ENCODE measurements at regions of chr16 and their contacts with region 1.

Region 1: DNA sequence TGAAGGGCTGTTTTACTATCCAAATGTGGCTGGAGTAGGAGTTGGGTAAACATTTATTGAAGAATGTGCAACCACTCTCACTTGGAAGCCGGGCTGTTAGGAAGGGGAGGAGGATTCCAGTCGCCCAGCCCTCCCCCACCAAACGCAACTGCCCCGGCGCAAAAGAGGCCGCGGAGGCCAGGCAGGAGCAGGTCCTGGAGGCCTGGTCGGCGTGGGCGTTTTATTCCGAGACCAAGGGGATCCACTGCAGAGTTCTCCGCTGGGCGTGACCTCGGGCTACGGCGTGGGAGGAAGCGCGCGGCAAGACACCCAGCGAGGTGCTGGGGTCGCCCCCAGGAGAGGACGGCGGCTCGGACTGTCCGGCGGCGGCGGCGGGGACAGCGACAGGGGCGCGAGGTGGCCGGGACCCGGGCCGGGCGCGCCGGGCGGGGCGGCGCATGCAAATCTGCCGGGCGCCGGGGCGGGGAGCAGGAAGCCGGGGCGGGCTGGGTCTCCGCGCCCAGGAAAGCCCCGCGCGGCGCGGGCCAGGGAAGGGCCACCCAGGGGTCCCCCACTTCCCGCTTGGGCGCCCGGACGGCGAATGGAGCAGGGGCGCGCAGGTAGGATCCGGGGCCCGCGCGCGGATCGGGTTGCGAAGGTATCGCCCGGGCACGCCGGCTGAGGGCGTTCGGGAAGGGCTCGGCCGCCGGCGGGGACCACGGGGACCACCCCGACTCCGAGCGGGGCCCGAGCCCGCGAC is at the start of gene IL4R:
- DNase-seq: peak; percentile 74 to 76
- ATAC-seq: peak; percentile 32 to 67 (median 54)
- H3K4me3 ChIP-seq: peak within 1 kb of the TSS; percentile 70 to 97 (median 86)
- H3K27ac ChIP-seq: peak within 1 kb of the TSS; percentile 88 to 100 (median 96)
- H3K4me1 ChIP-seq: peaks cover 0 to 52% (median 36%) of the 10 kb centered on the region in 9 donors
- H3K27me3 ChIP-seq: peaks cover 0 to 12% (median 0%) of the 10 kb centered on the region in 7 donors
- CTCF ChIP-seq: no peak
- total RNA-seq, gene IL4R: 5.0 to 28.9 (median 9.7) TPM

Region 2: GRCh38 chr16:27242868-27243590 is 70.6 kb before region 1 on chr16:
- intact Hi-C with region 1: loop called in 7 of 10 experiments (anchors 5 to 10 kb)
- DNase-seq: no peak
- ATAC-seq: peak; percentile 50 to 80 (median 72)
- H3K4me3 ChIP-seq: peak overlapping the region in 6 of 10 donors; percentile 4 to 31 (median 27)
- H3K27ac ChIP-seq: peak overlapping the region in 9 of 10 donors; percentile 24 to 84 (median 68)
- H3K4me1 ChIP-seq: peaks cover 13 to 80% (median 60%) of the 10 kb centered on the region in 9 donors
- H3K27me3 ChIP-seq: no peaks in the 10 kb centered on the region
- CTCF ChIP-seq: no peak

Region 3: DNA sequence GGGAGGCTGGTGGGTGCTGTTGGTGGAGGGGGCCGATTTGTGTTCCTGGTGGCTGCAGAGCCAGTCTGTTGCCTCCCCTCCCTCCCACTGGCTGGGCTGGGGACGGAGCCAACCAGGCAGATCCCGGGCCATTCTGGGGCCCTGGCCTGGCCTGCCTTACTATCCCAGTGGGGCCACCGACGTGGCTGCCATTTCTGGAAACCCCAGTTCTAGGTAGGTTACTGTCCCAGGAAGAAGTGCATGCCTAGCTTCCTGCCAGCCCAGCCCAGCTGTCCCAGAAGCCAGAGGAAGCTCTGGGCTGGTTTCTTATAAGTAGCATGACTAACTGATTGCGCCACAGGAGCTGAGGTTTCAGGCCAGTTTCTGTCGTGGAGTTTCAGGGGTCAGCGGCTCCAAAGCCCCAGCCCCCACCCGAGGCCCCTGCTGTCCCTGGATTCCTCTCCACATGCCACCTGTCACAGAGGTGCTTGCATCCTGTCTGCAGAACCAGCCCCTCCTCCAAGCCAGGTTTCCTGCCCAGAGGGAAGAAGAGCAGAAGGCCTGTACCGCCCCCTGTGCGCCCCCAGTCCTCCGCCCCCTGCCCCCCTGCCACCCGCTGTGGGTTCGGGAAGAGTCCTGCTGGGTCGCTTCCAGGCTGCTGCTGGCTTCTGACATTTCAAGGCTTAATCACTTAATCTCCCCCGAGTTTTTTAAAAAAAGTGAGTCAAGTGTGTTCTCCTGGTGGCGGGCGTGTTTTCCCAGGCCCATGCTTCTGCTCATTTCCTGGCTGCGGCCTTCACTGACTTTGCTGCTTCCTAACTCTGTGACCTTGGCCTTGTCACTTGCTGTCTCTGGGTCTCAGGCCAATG is 13.4 kb after region 1 on chr16:
- intact Hi-C with region 1: loop called in 3 of 10 experiments (anchors 2 kb)
- DNase-seq: peak; percentile 63 to 73
- ATAC-seq: peak; percentile 36 to 90 (median 72)
- H3K4me3 ChIP-seq: peak overlapping the region in 2 of 10 donors; percentile 14 to 35
- H3K27ac ChIP-seq: peak overlapping the region; percentile 50 to 100 (median 86)
- H3K4me1 ChIP-seq: peaks cover 9 to 99% (median 47%) of the 10 kb centered on the region in 9 donors
- H3K27me3 ChIP-seq: no peaks in the 10 kb centered on the region
- CTCF ChIP-seq: peak in 2 of 9 donors; percentile 4 to 9

Region 4: DNA sequence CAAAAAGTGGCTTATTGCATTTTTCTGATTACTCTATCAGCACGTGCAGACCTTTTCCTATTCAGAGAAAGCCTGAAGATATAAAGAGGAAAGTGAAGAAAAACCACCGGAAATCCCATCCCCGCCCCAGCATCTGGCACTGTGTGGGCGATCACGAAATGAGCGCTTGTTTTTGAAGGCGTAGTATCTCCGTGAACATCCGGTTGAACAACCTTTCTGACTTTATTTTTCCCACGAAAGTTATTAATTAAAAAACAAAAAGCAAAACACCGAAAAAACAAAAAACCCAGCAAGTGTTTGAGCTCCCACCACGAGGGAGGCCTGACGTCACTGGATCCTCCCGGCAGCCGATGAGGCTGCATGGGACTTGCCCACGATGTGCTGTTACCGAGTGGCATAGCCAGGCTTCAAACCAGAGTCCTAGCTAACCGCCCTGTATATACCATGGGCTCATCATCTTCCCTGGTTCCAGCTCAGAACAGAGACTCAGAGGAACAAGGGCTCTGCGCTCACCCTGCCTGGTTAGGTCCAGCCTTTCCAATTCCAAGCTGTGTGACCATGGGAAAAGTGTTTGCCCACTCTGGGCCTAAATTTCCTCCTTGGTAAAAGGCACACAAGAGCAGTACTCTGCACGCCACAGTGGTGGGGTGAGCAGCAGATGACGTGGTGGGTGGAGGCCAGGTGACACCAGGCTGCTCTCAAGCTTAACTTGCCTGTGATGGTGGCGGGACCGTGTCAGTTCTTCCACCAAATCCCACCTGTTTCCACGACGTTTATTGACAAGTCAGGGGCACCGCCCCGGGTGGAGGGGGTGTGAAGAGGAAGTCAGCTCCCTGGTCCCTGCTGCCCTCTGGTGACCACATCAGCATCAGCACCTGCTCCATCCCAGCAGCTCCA is 54.1 kb after region 1 on chr16:
- intact Hi-C with region 1: loop called in 2 of 10 experiments (anchors 5 to 10 kb)
- DNase-seq: peak; percentile 82
- ATAC-seq: peak; percentile 87 to 94 (median 90)
- H3K4me3 ChIP-seq: peak overlapping the region in 7 of 10 donors; percentile 20 to 41 (median 32)
- H3K27ac ChIP-seq: peak overlapping the region in 9 of 10 donors; percentile 38 to 87 (median 53)
- H3K4me1 ChIP-seq: peaks cover 0 to 36% (median 13%) of the 10 kb centered on the region in 9 donors
- H3K27me3 ChIP-seq: no peaks in the 10 kb centered on the region
- CTCF ChIP-seq: peak; percentile 77 to 92 (median 86)